Activated CD8-positive, alpha-beta T cell treated with anti-CD3 and anti-CD28 coated beads, Interleukin-2, amount 10 ng/mL, durations not matched to agents 7 days and 5 days (primary cell): ENCODE measurements at regions of chr4 and their contacts with region 1.

Region 1: DNA sequence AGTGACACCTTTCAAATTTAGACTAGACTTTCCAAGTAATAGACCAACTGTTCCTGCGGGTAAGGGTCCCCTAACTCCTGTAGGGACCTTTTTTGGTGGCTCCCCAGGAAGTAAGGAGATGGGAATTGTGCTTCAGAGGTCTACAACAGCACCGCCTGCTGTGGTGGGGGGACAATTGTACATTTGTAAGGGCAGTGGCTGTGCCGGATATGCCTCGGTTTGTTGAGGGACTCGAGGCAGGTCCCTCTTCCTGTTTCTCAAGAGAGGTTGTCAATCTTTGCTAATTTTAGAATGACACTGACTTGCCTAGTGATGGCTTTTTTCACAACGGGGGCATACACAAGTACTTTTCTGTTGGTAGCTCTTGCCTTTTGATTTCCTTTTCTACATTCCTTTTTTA is 15.5 kb upstream of the HSD17B11 start:
- DNase-seq: peak; percentile 51
- ATAC-seq: peak; percentile 75
- H3K4me3 Mint-ChIP-seq: peak overlapping the region; percentile 4
- H3K27ac Mint-ChIP-seq: peak overlapping the region; percentile 74
- H3K4me1 Mint-ChIP-seq: peaks cover 20% of the 10 kb centered on the region
- H3K27me3 Mint-ChIP-seq: peaks cover 11% of the 10 kb centered on the region

Region 2: DNA sequence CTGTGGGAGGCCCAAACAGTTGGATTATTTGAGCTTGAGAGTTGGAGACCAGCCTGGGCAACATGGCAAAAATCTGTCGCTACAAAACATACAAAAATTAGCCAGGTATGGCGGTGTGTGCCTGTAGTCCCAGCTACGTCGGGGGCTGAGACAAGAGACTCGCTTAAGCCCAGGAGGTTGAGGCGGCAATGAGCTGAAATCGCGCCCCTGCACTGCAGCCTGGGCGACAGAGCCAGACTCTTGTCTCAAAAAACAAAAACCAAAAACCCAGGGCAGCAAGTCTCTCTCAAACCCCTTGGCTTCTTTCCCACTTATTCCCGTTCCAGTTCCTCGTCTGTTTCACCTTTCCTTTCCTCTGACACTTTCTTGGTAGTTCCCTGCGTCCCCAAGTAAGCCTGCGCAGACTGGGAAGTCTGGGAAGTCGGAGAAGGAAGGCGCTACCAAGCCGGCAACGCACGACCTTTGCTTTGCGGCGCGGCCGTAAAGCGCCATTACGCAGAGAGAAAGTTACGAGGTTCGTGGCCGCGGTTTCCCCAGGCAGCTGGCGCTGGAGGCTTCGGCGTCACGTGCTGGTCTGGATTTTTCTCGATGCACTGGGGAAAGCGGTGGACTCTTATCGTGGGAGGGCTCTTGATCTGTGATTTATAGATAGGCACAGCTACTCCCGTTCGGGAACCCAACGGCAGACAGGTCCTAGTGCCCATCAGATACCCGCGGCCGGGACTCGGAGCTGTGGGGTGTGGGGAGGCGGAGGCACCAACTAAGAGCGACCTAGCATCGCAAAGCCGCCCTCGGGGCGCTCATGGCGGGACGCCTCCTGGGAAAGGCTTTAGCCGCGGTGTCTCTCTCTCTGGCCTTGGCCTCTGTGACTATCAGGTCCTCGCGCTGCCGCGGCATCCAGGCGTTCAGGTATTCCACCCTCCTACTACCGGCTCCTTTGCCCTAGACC is 15.9 kb after region 1 on chr4 and contains the start of gene NUDT9:
- CTCF ChIA-PET with region 1: interaction called, 15 read pairs
- POLR2A ChIA-PET with region 1: interaction called, 5 read pairs
- DNase-seq: peak; percentile 91
- ATAC-seq: peak; percentile 90
- H3K4me3 Mint-ChIP-seq: peak within 1 kb of the TSS; percentile 96
- H3K27ac Mint-ChIP-seq: peak within 1 kb of the TSS; percentile 96
- H3K4me1 Mint-ChIP-seq: peaks cover 27% of the 10 kb centered on the region
- H3K27me3 Mint-ChIP-seq: no peaks in the 10 kb centered on the region
- total RNA-seq, gene NUDT9: 10.9 to 11.0 TPM

Region 3: DNA sequence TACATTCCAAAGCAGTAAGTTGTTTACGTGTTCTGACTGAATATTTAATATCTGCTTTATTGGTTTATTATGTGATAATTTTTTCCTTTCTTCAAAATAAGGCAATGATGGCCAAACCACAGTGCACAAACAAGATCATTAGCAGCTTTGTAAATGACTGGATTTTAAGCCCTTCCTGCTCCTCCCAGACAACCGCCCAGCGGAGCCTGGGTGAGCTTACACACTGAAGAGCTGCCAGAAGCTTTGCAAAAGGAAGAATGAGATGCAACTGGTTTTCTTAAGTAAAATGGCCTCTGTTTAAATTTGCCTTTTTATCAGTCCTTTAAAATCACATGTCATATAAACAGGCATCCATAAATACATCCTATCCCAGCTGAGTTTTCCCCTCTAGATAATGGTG is 70.5 kb after region 1 on chr4:
- CTCF ChIA-PET with region 1: no interaction called
- POLR2A ChIA-PET with region 1: no interaction called
- DNase-seq: no peak
- ATAC-seq: no peak
- H3K4me3 Mint-ChIP-seq: no peak overlapping the region
- H3K27ac Mint-ChIP-seq: no peak overlapping the region
- H3K4me1 Mint-ChIP-seq: no peaks in the 10 kb centered on the region
- H3K27me3 Mint-ChIP-seq: no peaks in the 10 kb centered on the region